Calu3 (cell line): ENCODE measurements at regions of chr3 and their contacts with region 1.

Region 1: GRCh38 chr3:42179110-42179725 is 86.8 kb downstream of the CCK start:
- DNase-seq: peak; percentile 74
- H3K4me3 Mint-ChIP-seq: peak overlapping the region; percentile 60
- H3K27ac Mint-ChIP-seq: peak overlapping the region; percentile 87
- H3K4me1 Mint-ChIP-seq: peaks cover 55% of the 10 kb centered on the region
- H3K27me3 Mint-ChIP-seq: no peaks in the 10 kb centered on the region
- CTCF ChIP-seq: no peak

Region 2: GRCh38 chr3:42106646-42107045 is 72.6 kb before region 1 on chr3:
- CTCF ChIA-PET with region 1: no interaction called
- intact Hi-C with region 1: no loop called
- DNase-seq: no peak
- H3K4me3 Mint-ChIP-seq: no peak overlapping the region
- H3K27ac Mint-ChIP-seq: no peak overlapping the region
- H3K4me1 Mint-ChIP-seq: no peaks in the 10 kb centered on the region
- H3K27me3 Mint-ChIP-seq: no peaks in the 10 kb centered on the region
- CTCF ChIP-seq: no peak

Region 3: GRCh38 chr3:42159706-42160472 is 19.3 kb before region 1 on chr3:
- CTCF ChIA-PET with region 1: interaction called, 12 read pairs
- intact Hi-C with region 1: loop called (anchors 1 kb)
- DNase-seq: peak; percentile 88
- H3K4me3 Mint-ChIP-seq: peak overlapping the region; percentile 97
- H3K27ac Mint-ChIP-seq: peak overlapping the region; percentile 43
- H3K4me1 Mint-ChIP-seq: peaks cover 32% of the 10 kb centered on the region
- H3K27me3 Mint-ChIP-seq: no peaks in the 10 kb centered on the region
- CTCF ChIP-seq: no peak

Region 4: DNA sequence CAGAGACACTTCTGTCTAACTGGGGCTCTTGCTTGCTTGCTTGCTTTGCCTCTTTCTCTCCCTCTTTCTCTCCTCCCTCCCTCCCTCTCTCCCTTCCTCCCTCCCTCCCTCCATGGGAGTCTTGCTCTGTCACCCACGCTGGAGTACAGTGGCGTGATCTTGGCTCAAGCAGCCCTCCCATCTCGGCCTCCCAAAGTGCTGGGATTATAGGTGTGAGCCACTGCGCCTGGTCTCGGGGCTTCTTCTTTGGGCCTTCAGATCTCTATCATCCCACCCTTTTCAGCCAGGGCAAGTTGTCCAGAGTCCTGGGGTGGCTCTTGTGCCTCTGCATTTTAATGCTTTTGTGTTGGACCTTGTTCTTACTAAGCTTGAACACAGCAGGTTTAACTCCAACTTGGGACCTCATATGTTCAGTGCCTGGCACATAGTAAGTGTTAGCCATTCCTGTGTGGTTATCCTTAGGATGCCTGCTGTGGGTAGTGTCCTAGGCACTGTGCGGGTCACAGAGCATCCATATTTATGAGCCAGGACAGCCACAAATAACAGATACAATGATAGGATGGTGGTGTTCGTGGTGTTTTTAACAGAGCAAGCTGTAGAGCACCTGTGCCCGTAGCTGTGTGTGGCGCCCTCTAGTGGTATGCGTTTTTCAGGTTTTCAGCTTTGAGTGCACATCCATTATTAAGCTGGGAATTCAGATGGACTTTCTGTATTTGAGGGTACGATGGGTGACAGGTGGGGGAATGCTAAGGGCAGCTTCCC is 11.7 kb after region 1 on chr3:
- CTCF ChIA-PET with region 1: interaction called, 16 read pairs
- intact Hi-C with region 1: no loop called
- DNase-seq: peak; percentile 85
- H3K4me3 Mint-ChIP-seq: no peak overlapping the region
- H3K27ac Mint-ChIP-seq: peak overlapping the region; percentile 36
- H3K4me1 Mint-ChIP-seq: peaks cover 40% of the 10 kb centered on the region
- H3K27me3 Mint-ChIP-seq: no peaks in the 10 kb centered on the region
- CTCF ChIP-seq: peak; percentile 86

Region 5: DNA sequence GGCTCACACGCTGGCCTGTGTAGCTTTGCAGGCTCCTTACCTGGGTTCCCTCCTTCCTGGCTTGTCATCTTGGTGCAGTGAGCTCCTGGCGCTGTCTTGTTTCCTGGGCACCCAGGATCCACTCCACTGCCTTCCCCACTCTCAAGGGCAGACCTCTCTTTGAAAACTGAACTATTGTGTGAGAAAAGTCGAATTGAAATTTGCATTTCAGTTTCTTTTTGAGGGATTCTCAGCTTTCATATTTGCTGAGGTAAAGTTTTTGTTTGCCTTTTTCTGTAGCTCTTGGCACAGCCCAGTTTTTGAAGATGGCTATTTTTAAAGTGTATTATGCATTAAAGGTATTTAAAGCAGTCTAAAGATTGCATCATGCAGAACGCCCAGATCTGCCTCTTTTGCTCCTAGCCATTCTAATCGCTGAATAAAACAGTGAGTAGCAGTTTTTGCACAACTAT is 16.7 kb after region 1 on chr3:
- CTCF ChIA-PET with region 1: interaction called, 16 read pairs
- intact Hi-C with region 1: no loop called
- DNase-seq: no peak
- H3K4me3 Mint-ChIP-seq: no peak overlapping the region
- H3K27ac Mint-ChIP-seq: no peak overlapping the region
- H3K4me1 Mint-ChIP-seq: peaks cover 8% of the 10 kb centered on the region
- H3K27me3 Mint-ChIP-seq: no peaks in the 10 kb centered on the region
- CTCF ChIP-seq: no peak